OCI-LY7 (cell line): ENCODE measurements at regions of chr7 and their contacts with region 1.

Region 1: DNA sequence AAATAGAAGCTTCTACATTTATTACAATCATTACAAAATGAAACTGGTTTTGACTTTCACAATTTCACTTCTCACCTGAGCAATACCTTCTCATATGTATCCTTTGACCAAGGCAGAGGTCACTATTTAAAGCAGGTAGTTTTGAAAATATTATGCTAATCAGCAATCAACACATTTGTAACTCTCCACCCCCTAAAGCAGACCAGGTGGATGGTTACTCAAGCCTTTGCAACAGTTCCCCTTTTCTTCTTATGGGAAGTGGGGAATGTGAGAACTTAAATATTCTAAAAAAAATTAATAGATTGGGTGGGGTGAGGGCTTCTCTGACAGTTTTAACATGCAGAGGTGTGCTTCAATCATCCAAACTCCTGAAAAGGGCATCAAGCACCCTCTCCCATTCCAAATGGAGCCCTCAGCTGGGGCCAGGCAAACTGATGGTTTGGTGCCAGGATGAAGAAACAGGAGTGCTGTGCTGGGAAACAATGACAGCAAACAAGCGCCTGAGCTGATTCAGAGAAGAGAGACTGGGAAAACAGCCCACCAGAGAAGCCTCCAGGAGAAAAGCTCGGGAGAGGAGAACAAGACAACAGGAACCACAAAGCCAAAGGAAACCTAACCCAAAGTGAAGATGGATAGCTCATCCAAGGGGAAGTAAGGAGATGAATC is 17.1 kb downstream of the RAPGEF5 start:
- DNase-seq: peak; percentile 42
- H3K4me3 ChIP-seq: peak overlapping the region; percentile 17
- H3K27ac ChIP-seq: peak overlapping the region; percentile 52
- H3K4me1 ChIP-seq: peaks cover 55% of the 10 kb centered on the region
- CTCF ChIP-seq: no peak

Region 2: DNA sequence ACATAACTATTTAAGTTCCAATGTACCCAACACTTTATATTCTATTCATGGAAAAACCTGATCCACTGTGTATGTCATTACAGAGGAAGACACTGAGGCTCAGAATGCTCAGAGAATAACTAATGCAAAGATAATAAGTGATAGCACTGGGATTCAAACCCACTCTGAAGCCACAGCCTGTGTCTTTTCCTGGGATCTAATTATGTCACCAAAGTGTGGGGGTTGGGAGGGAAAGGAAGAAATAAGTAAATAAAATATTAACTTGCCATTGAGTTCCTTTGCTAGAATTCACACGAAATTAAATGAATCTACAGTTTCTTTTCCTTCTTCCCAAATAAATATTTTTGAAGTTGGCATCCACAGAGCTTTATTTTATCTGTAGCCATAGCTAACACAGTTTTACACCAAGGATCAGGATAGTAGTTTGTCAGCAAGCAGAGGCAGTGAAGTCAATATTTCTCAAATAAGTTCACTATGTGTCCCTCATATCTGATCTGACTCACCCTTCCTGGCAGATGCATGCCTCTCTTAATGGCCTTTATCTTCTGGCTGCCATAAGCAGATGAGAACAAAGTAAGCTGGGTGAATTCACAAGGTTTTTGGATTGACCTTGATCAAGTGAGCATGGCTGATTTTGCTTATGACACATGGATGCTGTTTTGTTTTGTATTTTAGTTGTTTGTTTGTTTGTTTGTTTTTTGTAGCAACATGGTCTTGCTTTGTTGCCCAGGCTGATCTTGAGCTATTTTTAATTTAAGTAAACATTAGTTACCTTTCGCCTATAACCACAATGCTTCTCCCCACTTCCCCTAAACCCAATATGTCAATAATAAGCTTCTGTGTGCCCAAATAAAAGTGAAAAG is 10.8 kb after region 1 on chr7:
- CTCF ChIA-PET with region 1: no interaction called
- POLR2A ChIA-PET with region 1: interaction called, 12 read pairs
- intact Hi-C with region 1: no loop called
- DNase-seq: peak; percentile 31
- H3K4me3 ChIP-seq: peak overlapping the region; percentile 53
- H3K27ac ChIP-seq: peak overlapping the region; percentile 82
- H3K4me1 ChIP-seq: peaks cover 86% of the 10 kb centered on the region
- CTCF ChIP-seq: no peak